ENCODE measurements at regions of chr4 and their contacts with region 1.

Region 1: GRCh38 chr4:101347557-101348366 is 436 bp upstream of the PPP3CA start:
- DNase-seq: peak; percentile 99
- ATAC-seq: peak; percentile 96

Region 2: GRCh38 chr4:101175896-101176676 is 171.7 kb before region 1 on chr4:
- intact Hi-C with region 1: loop called (anchors 5 kb)
- DNase-seq: no peak
- ATAC-seq: peak; percentile 79

Region 3: DNA sequence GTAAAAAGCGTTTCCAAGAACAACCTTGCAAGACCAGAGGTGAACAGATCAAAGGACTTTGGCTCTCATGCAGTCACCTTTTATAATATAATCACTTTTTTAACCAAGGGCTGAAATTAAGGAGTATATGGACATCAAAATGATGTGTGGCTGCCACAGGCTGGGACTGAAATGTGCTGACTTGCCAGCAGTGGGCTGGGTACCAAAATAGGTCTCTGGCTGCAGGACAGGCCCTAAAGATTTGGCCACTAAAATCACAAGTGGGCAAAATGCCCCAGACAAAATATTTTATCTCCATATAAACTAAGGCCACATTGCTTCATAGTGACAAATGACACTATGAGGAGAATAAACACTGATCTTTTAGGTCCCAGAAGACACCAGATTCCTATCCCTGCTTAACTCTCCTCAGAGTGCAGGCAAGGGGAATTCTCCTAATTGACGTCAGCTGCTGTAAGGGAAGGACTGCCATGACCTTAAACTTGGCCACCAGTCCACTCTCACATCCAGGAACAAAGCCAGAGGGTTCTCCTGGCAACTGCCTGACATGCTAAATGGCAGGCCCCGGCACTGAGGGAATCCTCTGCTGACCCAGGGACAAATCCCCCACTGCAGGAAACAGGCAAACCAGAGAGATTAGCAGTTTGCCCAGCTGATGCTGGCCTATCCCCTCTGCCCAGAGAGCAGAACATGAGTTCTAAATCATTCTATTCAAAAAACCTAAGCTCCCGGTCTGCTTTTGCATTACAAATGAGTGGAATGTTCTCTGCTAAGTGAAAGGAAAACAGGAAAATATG is 156.3 kb before region 1 on chr4:
- intact Hi-C with region 1: loop called (anchors 2 kb)
- DNase-seq: peak; percentile 78
- ATAC-seq: peak; percentile 99

Region 4: DNA sequence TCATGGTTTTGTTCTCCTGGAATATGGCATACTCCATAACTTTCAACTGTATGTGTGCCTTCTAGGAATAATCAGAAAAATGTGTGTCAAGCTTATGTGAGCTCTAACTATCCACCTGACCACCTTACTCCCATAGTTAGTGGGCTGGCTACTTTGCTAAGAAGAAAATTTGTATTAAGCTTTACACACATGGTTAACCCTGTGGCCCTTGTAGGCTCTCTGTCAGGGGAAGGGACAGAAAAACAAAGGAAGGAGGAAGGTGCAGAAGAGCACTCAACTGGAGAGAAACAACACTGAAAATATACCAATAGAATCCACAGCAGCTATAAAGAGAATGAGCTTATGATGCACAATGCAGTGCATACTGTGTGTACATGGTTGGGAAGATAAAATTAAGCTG is 85.1 kb before region 1 on chr4:
- intact Hi-C with region 1: no loop called
- DNase-seq: no peak
- ATAC-seq: no peak

Region 5: GRCh38 chr4:101282076-101282844 is 65.5 kb before region 1 on chr4:
- intact Hi-C with region 1: loop called (anchors 5 kb)
- DNase-seq: no peak
- ATAC-seq: no peak

Region 6: DNA sequence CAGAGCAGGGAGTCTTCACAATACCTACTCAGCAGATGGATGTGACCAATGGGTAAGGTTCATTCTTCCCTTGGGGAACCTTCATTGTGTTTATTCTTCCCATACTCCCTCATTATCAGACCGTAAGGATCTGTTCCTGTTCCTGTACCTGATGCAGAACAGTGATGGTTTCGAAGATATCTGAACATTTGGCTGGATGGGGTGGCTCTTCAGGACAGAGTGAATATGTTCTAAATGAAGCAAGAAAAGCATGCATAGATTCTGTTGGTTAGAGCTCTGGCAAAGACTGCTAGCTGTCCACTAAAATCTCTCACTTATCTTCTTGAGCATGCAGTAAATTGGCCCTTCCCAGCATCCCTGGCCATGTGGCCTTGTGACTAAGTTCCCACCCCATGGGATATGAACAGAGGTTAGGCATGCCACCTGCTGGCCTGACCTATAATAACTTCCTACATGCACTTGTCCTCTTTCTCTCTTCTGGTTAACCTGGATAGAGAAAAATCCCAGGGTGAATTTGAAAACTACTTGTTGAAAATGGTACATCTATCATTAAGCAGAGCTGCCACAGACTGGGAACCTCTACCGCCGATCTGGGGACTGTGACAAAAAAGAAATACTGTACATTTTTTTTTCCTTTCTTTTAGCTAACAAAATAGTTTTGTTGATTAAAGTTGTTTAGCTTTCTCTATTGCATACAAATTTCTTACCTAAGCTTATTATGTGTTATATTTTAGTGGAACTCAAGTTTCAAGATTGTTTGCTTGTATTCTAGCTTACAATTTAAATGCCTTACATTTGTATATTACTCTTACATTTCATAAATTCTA is 382.7 kb after region 1 on chr4:
- intact Hi-C with region 1: loop called (anchors 5 kb)
- DNase-seq: no peak
- ATAC-seq: peak; percentile 89